H1 (cell line): ENCODE measurements at regions of chr5 and their contacts with region 1.

Region 1: DNA sequence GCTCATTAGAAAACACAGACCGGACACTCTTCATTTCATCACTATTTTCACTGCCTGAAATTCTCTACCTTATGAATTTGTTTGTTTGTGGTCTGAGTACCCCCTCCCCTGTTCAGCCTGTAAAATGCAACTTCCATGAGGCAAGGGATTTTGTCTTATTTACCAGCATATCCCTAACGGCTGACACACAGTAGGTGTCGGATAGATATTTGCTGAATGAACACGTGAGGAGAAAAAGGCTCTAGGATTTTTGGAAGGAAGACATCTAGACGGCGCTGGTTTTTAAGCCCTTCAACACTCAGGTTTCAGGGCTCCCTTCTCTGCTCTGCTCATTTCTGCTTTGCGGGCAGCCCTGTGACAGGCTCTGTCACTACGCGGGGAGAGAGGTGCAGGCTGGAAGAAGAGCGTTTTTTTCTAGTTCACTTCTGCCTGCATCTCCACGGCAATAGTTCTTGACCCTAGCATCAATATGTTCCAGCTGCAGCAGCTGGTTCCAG is 41.0 kb downstream of the KCNMB1 start:
- DNase-seq: no peak
- H3K4me3 ChIP-seq: no peak overlapping the region
- H3K27ac ChIP-seq: no peak overlapping the region
- H3K4me1 ChIP-seq: peaks cover 9 to 13% (median 10%) of the 10 kb centered on the region in 4 experiments; a peak in 6 of 7 replicates
- H3K27me3 ChIP-seq: peaks cover 0 to 4% (median 1%) of the 10 kb centered on the region in 4 experiments; a peak in 5 of 7 replicates
- CTCF ChIP-seq: peak in 2 of 3 experiments; percentile 27 to 28; a peak in 2 of 4 replicates
- EP300 ChIP-seq: no peak
- POLR2A ChIP-seq: no peak
- RAD21 ChIP-seq: peak; percentile 57 to 68

Region 2: GRCh38 chr5:170333161-170333910 is 14.8 kb before region 1 on chr5:
- CTCF ChIA-PET with region 1: interaction called, 47 read pairs
- POLR2A ChIA-PET with region 1: no interaction called
- DNase-seq: peak in 1 of 2 experiments; percentile 67
- H3K4me3 ChIP-seq: peak overlapping the region in 1 of 4 experiments; percentile 15; a peak in 2 of 8 replicates
- H3K27ac ChIP-seq: no peak overlapping the region
- H3K4me1 ChIP-seq: peaks cover 7 to 31% (median 23%) of the 10 kb centered on the region in 4 experiments
- H3K27me3 ChIP-seq: no peaks in the 10 kb centered on the region
- CTCF ChIP-seq: no peak
- EP300 ChIP-seq: no peak
- POLR2A ChIP-seq: no peak
- RAD21 ChIP-seq: no peak; a peak in 1 of 4 replicates